Activated CD4-positive, alpha-beta T cell treated with anti-CD3 and anti-CD28 coated beads for 36 hours (primary cell): ENCODE measurements at regions of chr6 and their contacts with region 1.

Region 1: DNA sequence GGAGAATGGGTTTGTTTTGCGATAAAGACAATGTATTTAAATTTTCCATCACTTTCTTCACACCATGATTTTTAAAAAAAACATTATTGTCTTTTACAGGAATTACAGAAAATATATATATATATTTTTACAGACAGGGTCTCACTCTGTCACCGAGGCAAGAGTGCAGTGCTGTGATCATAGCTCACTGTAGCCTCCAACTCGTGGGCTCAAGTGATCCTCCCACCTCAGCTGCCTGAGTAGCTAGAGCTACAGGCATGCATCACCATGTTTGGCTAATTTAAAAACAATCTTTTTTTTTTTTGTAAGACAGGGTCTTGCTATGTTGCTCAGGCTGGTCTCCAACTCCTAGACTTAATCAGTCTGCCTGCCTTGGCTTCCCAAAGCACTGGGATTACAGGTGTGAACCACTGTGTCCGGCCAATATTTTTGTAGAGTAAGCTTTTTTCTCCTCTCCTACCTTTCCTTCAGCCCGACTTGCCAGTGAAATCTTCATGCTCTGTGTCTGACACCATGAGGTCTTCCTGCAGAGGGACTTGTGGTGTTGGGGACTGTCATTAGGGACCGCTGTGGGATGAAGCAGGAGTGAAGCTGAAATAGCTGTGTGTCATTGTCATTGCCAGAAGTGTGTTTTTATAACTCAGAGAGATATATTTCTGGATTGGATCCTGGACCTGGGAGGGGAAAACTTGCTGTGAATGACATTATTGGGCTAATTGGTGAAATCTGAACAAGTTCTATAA is 13.2 kb downstream of the DSP start:
- DNase-seq: no peak
- ATAC-seq: no peak
- H3K4me3 Mint-ChIP-seq: no peak overlapping the region
- H3K27ac Mint-ChIP-seq: no peak overlapping the region
- H3K4me1 Mint-ChIP-seq: no peaks in the 10 kb centered on the region
- H3K27me3 Mint-ChIP-seq: peaks cover 18% of the 10 kb centered on the region

Region 2: GRCh38 chr6:7292596-7293255 is 262.0 kb before region 1 on chr6:
- CTCF ChIA-PET with region 1: no interaction called
- POLR2A ChIA-PET with region 1: no interaction called
- intact Hi-C with region 1: no loop called
- DNase-seq: no peak
- ATAC-seq: no peak
- H3K4me3 Mint-ChIP-seq: no peak overlapping the region
- H3K27ac Mint-ChIP-seq: no peak overlapping the region
- H3K4me1 Mint-ChIP-seq: peaks cover 7% of the 10 kb centered on the region
- H3K27me3 Mint-ChIP-seq: no peaks in the 10 kb centered on the region

Region 3: GRCh38 chr6:7568021-7568420 is 13.3 kb after region 1 on chr6:
- CTCF ChIA-PET with region 1: no interaction called
- POLR2A ChIA-PET with region 1: no interaction called
- intact Hi-C with region 1: no loop called
- DNase-seq: no peak
- ATAC-seq: no peak
- H3K4me3 Mint-ChIP-seq: no peak overlapping the region
- H3K27ac Mint-ChIP-seq: no peak overlapping the region
- H3K4me1 Mint-ChIP-seq: no peaks in the 10 kb centered on the region
- H3K27me3 Mint-ChIP-seq: peaks cover 21% of the 10 kb centered on the region

Region 4: DNA sequence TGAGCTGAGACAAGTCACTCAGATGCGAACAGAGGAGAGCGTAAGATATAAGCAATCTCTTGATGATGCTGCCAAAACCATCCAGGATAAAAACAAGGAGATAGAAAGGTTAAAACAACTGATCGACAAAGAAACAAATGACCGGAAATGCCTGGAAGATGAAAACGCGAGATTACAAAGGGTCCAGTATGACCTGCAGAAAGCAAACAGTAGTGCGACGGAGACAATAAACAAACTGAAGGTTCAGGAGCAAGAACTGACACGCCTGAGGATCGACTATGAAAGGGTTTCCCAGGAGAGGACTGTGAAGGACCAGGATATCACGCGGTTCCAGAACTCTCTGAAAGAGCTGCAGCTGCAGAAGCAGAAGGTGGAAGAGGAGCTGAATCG is 25.8 kb after region 1 on chr6:
- CTCF ChIA-PET with region 1: interaction called, 3 read pairs
- POLR2A ChIA-PET with region 1: no interaction called
- intact Hi-C with region 1: loop called in 1 of 2 experiments (anchors 1 kb)
- DNase-seq: no peak
- ATAC-seq: no peak
- H3K4me3 Mint-ChIP-seq: no peak overlapping the region
- H3K27ac Mint-ChIP-seq: no peak overlapping the region
- H3K4me1 Mint-ChIP-seq: no peaks in the 10 kb centered on the region
- H3K27me3 Mint-ChIP-seq: peaks cover 6% of the 10 kb centered on the region

Region 5: GRCh38 chr6:7590918-7591302 is 36.2 kb after region 1 on chr6:
- CTCF ChIA-PET with region 1: no interaction called
- POLR2A ChIA-PET with region 1: no interaction called
- intact Hi-C with region 1: no loop called
- DNase-seq: no peak
- ATAC-seq: no peak
- H3K4me3 Mint-ChIP-seq: peak overlapping the region; percentile 96
- H3K27ac Mint-ChIP-seq: peak overlapping the region; percentile 93
- H3K4me1 Mint-ChIP-seq: peaks cover 39% of the 10 kb centered on the region
- H3K27me3 Mint-ChIP-seq: no peaks in the 10 kb centered on the region

Region 6: DNA sequence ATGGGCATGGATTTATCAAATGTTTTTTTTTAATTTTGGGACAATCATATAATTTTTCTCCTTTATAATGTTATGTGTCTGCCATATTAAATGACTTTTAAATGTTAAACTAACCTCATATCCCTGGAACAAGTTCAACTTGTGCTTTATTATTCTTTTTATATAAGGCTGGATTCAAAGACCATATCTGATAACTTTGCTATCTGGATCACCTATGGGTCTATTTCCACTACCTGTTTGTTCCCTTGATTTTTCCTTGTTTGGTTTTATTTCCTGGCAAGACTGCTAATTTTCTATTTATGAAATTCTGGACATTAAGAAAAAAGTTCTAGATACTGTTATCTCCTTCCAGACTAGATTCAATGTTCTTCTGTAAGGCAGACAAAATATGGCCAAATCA is 297.1 kb after region 1 on chr6:
- CTCF ChIA-PET with region 1: no interaction called
- POLR2A ChIA-PET with region 1: no interaction called
- intact Hi-C with region 1: no loop called
- DNase-seq: no peak
- ATAC-seq: no peak
- H3K4me3 Mint-ChIP-seq: no peak overlapping the region
- H3K27ac Mint-ChIP-seq: no peak overlapping the region
- H3K4me1 Mint-ChIP-seq: no peaks in the 10 kb centered on the region
- H3K27me3 Mint-ChIP-seq: peaks cover 4% of the 10 kb centered on the region